Activated CD4-positive, alpha-beta memory T cell treated with anti-CD3 and anti-CD28 coated beads for 36 hours (primary cell): ENCODE measurements at regions of chr10 and their contacts with region 1.

Region 1: GRCh38 chr10:114925587-114926586 is 12.1 kb upstream of the TRUB1 start:
- DNase-seq: peak; percentile 64
- H3K4me3 Mint-ChIP-seq: no peak overlapping the region
- H3K27ac Mint-ChIP-seq: no peak overlapping the region
- H3K4me1 Mint-ChIP-seq: peaks cover 12% of the 10 kb centered on the region
- H3K27me3 Mint-ChIP-seq: peaks cover 13% of the 10 kb centered on the region

Region 2: DNA sequence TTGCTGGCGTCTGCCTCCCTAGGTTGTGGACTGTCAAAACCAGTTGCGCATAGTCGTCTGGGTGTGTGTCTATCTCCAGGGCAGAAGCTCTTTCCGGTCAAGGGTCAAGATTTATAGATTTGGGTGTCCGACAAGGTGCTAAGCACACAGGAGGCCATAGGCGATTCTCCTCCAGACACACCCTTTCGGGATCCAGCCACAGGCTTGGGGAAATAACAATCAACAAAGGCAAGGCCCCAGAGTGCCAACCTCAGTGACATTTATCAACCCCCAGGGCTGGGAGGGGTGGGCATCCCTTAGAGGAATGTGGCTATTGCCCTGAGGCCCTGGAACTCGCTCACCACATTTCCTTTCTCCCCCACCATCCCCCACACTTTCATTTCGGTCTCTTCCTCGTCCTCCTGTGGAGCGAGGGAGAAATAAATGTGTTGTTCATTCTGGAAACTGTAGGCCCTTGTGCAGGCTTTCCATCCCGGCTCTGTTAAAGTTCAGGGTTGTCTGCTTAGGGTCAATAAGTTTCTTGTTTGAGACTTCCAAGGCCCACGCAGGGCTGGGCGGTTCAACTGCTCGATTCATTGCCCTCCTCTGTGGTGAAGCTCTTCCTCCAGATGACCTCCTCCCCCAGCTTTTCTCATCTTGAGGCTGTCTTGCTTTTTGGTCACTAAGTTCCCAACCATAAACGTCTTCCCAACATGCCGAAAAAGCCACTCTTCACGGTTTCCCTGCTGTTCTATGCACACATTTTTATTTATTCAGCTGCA is 579.4 kb before region 1 on chr10:
- CTCF ChIA-PET with region 1: no interaction called
- POLR2A ChIA-PET with region 1: no interaction called
- intact Hi-C with region 1: no loop called
- DNase-seq: no peak
- H3K4me3 Mint-ChIP-seq: no peak overlapping the region
- H3K27ac Mint-ChIP-seq: no peak overlapping the region
- H3K4me1 Mint-ChIP-seq: no peaks in the 10 kb centered on the region
- H3K27me3 Mint-ChIP-seq: peaks cover 1% of the 10 kb centered on the region

Region 3: GRCh38 chr10:114767101-114767985 is 158.5 kb before region 1 on chr10:
- CTCF ChIA-PET with region 1: no interaction called
- POLR2A ChIA-PET with region 1: no interaction called
- intact Hi-C with region 1: no loop called
- DNase-seq: peak; percentile 17
- H3K4me3 Mint-ChIP-seq: peak overlapping the region; percentile 60
- H3K27ac Mint-ChIP-seq: no peak overlapping the region
- H3K4me1 Mint-ChIP-seq: peaks cover 4% of the 10 kb centered on the region
- H3K27me3 Mint-ChIP-seq: peaks cover 18% of the 10 kb centered on the region

Region 4: DNA sequence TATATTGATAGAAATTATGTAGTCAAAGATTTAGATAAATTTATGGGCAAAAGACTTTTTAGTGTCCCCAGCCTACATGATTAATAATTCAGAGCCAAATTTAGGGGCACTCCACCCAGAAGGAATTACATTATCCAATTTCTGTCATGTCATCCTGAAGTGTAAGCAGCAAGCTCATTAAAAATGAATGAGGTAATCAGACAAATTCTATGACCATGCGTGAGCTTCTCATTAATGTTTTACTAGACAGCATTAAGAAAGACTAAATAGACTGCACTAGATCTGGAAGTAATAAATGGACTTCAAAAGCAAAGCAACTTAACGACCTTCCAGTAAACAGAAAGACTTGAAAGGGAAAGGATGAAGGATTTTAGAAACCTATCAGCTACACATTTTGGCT is 10.6 kb before region 1 on chr10:
- CTCF ChIA-PET with region 1: no interaction called
- POLR2A ChIA-PET with region 1: no interaction called
- intact Hi-C with region 1: loop called (anchors 1 kb)
- DNase-seq: no peak
- H3K4me3 Mint-ChIP-seq: no peak overlapping the region
- H3K27ac Mint-ChIP-seq: no peak overlapping the region
- H3K4me1 Mint-ChIP-seq: peaks cover 11% of the 10 kb centered on the region
- H3K27me3 Mint-ChIP-seq: peaks cover 1% of the 10 kb centered on the region

Region 5: GRCh38 chr10:115018185-115018931 is 92.5 kb after region 1 on chr10:
- CTCF ChIA-PET with region 1: no interaction called
- POLR2A ChIA-PET with region 1: no interaction called
- intact Hi-C with region 1: no loop called
- DNase-seq: no peak
- H3K4me3 Mint-ChIP-seq: no peak overlapping the region
- H3K27ac Mint-ChIP-seq: no peak overlapping the region
- H3K4me1 Mint-ChIP-seq: no peaks in the 10 kb centered on the region
- H3K27me3 Mint-ChIP-seq: peaks cover 7% of the 10 kb centered on the region